GM13976 (cell line): ENCODE measurements at regions of chr3 and their contacts with region 1.

Region 1: GRCh38 chr3:17831366-17831765 is 88.9 kb upstream of the TBC1D5 start:
- DNase-seq: no peak
- CTCF ChIP-seq: no peak

Region 2: DNA sequence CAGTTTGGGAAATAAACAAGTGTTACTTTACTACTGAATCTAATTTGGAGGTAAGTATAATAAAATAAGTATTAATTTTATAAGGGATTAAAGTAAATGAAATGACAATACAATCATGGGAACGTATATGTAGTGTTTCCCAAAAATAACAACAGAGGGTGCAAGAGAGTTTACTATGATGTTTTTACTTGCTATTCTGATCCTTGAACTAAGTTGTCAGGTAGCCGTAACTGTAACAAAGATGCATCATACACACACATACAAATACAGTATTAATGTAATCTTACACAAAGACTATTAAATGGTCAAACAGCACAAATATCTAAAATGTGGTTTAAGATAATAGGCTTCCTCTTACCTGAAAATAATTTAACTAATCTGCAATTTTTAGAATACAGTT is 400.4 kb before region 1 on chr3:
- in situ Hi-C with region 1: loop called (anchors 10 kb)
- DNase-seq: peak; percentile 30
- CTCF ChIP-seq: peak; percentile 22